WTC11 (cell line): ENCODE measurements at regions of chr5 and their contacts with region 1.

Region 1: GRCh38 chr5:175809531-175810121 is 61.8 kb upstream of the CPLX2 start:
- DNase-seq: no peak
- ATAC-seq: peak; percentile 69
- H3K4me3 Mint-ChIP-seq: no peak overlapping the region
- H3K27ac Mint-ChIP-seq: no peak overlapping the region
- H3K4me1 Mint-ChIP-seq: peaks cover 20% of the 10 kb centered on the region
- H3K27me3 Mint-ChIP-seq: no peaks in the 10 kb centered on the region
- CTCF ChIP-seq: no peak

Region 2: GRCh38 chr5:175572886-175573285 is 236.7 kb before region 1 on chr5:
- CTCF ChIA-PET with region 1: no interaction called
- POLR2A ChIA-PET with region 1: no interaction called
- DNase-seq: no peak
- ATAC-seq: no peak
- H3K4me3 Mint-ChIP-seq: no peak overlapping the region
- H3K27ac Mint-ChIP-seq: no peak overlapping the region
- H3K4me1 Mint-ChIP-seq: peaks cover 41% of the 10 kb centered on the region
- H3K27me3 Mint-ChIP-seq: peaks cover 39% of the 10 kb centered on the region
- CTCF ChIP-seq: no peak

Region 3: DNA sequence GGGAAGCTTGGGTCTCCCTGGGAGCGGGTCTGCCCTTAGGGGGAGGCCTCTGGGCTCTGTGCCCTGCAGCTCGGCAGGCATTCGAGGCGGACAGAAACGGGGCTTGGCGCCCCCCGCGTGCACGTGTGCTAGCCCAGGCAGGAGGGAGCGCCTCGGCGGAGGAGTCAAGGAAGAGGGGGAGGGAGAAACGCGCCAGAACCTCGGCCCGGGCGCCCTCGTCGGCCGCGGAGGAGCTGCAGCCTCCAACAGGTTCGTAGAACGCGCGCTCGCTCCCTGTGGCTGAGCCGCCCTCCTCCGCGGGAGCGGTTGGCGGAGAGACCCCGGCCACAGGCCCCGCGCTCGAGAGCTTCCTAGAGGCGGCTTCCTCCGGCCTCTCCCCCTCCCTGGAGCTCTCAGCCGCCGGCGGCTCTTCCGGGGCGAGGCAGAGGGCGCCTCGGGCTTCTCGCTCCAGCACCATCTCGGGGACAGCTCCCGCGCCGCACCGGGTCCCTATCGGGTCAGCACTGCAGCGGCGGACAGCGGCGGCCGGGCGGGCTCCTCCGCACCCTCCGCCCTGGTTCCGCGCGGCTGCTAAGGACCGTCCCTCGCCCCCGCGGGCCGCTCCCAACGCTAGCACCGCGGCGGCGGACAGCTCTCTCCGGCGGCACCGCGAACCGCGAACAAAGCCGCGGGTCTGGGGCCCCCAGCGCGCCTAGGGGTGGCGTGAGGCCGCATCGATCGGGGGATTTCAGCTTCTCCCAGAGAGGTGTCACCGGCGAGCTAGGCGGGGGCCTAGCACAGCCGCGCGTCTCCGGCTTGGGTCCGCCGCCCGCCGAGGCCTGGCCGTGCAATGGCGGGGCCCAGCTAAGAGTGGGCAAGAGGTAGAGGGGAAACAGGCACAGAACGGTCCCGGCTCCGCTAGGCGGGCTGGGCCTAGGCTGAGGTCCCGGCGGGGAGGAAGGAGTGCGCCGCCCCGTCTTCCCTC is 12.8 kb before region 1 on chr5:
- CTCF ChIA-PET with region 1: interaction called, 10 read pairs
- POLR2A ChIA-PET with region 1: no interaction called
- DNase-seq: peak; percentile 94
- ATAC-seq: peak; percentile 88
- H3K4me3 Mint-ChIP-seq: peak overlapping the region; percentile 80
- H3K27ac Mint-ChIP-seq: no peak overlapping the region
- H3K4me1 Mint-ChIP-seq: peaks cover 33% of the 10 kb centered on the region
- H3K27me3 Mint-ChIP-seq: peaks cover 35% of the 10 kb centered on the region
- CTCF ChIP-seq: no peak

Region 4: GRCh38 chr5:175840050-175840841 is 30.6 kb after region 1 on chr5:
- CTCF ChIA-PET with region 1: no interaction called
- POLR2A ChIA-PET with region 1: no interaction called
- DNase-seq: no peak
- ATAC-seq: no peak
- H3K4me3 Mint-ChIP-seq: no peak overlapping the region
- H3K27ac Mint-ChIP-seq: no peak overlapping the region
- H3K4me1 Mint-ChIP-seq: peaks cover 32% of the 10 kb centered on the region
- H3K27me3 Mint-ChIP-seq: no peaks in the 10 kb centered on the region
- CTCF ChIP-seq: peak; percentile 85